GM13977 (cell line): ENCODE measurements at regions of chr1 and their contacts with region 1.

Region 1: GRCh38 chr1:246450611-246451251 is 56.3 kb downstream of the SMYD3 start:
- DNase-seq: peak; percentile 51
- CTCF ChIP-seq: peak; percentile 63

Region 2: DNA sequence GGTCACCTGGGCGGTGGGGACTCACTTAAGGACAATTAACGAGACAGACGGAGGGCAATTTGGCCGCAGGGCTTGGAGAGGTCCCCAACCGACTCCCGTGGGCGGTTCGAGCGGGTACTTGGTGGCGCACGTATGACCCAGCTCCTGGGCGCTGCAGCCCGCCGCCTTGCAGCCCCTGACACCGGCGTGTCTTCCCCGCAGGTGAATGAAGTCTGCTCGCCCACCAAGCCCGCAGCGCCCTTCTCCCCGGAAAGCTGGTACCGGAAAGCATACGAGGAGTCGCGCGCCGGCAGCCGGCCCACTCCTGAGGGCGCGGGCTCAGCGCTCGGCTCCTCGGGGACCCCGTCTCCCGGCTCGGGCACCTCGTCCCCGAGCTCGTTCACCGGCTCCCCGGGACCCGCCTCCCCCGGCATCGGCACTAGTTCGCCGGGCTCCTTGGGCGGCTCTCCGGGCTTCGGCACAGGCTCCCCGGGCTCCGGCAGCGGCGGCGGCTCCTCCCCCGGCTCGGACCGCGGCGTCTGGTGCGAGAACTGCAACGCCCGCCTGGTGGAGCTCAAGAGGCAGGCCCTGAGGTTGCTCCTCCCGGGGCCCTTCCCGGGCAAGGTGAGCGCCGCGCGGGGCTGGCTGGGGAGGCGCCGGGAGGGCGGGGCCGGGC is 1294.5 kb before region 1 on chr1:
- in situ Hi-C with region 1: loop called (anchors 25 kb)
- DNase-seq: peak; percentile 96
- CTCF ChIP-seq: peak; percentile 89